H1 (cell line): ENCODE measurements at regions of chr12 and their contacts with region 1.

Region 1: GRCh38 chr12:11171145-11171968 is at the start of gene SMIM10L1:
- DNase-seq: peak; percentile 82 to 88
- H3K4me3 ChIP-seq: peak within 1 kb of the TSS; percentile 76 to 100 (median 85)
- H3K27ac ChIP-seq: peak within 1 kb of the TSS; percentile 93
- H3K4me1 ChIP-seq: peaks cover 0 to 3% (median 0%) of the 10 kb centered on the region in 4 experiments; a peak in 1 of 7 replicates
- H3K27me3 ChIP-seq: no peaks in the 10 kb centered on the region
- CTCF ChIP-seq: no peak
- EP300 ChIP-seq: no peak
- POLR2A ChIP-seq: peak; percentile 82 to 96
- RAD21 ChIP-seq: no peak
- total RNA-seq, gene SMIM10L1: 14.2 and 15.1 TPM in 2 replicates

Region 2: GRCh38 chr12:11158885-11159444 is 12.4 kb before region 1 on chr12:
- CTCF ChIA-PET with region 1: interaction called, 3 read pairs
- POLR2A ChIA-PET with region 1: interaction called, 53 read pairs
- DNase-seq: no peak
- H3K4me3 ChIP-seq: no peak overlapping the region
- H3K27ac ChIP-seq: no peak overlapping the region
- H3K4me1 ChIP-seq: no peaks in the 10 kb centered on the region
- H3K27me3 ChIP-seq: no peaks in the 10 kb centered on the region
- CTCF ChIP-seq: no peak
- EP300 ChIP-seq: no peak
- POLR2A ChIP-seq: no peak
- RAD21 ChIP-seq: no peak

Region 3: GRCh38 chr12:11183011-11183410 is 11.7 kb after region 1 on chr12:
- CTCF ChIA-PET with region 1: no interaction called
- POLR2A ChIA-PET with region 1: interaction called, 11 read pairs
- DNase-seq: no peak
- H3K4me3 ChIP-seq: no peak overlapping the region
- H3K27ac ChIP-seq: no peak overlapping the region
- H3K4me1 ChIP-seq: no peaks in the 10 kb centered on the region
- H3K27me3 ChIP-seq: no peaks in the 10 kb centered on the region
- CTCF ChIP-seq: no peak
- EP300 ChIP-seq: no peak
- POLR2A ChIP-seq: no peak
- RAD21 ChIP-seq: no peak